ENCODE measurements at regions of chr22 and their contacts with region 1.

Region 1: DNA sequence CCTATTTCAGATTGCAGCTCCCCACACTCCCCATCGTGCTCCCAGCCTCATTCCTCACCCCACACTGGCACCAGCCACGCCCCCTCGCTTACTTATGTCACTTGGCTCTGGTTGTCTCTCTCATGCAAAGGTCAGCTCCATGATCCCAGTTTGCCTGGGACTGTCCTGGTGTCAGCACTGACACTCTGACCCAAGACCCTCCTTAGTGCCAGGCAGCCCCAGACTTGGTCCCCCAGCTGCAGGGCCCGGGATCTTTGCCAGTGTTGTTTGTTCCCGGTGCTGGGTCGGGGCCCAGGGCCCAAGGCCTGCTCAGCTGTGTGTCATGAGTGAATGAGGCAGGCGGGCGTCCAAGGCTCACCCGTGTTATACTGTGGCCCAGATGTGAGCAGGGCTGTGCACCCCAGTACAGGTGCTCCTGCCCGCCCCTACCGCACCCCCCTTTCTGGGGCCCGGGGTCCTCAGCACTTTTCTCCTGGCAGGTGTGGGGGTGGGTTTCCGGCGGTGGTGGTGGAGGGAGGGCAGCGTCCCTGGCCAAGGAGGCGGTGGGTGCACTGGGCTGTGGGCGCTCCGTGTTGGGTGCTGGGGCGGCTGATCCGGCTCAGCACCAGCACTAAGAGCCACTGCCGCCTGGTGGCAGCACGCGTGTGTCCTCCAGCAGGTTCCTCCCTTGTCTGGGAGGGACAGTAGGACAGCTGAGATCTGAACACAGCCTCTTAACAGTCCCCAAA is 19.5 kb downstream of the IL17REL start:
- DNase-seq: peak; percentile 49 to 65 (median 54)
- ATAC-seq: peak; percentile 97
- H3K4me3 ChIP-seq: no peak overlapping the region
- H3K27ac ChIP-seq: no peak overlapping the region
- H3K4me1 ChIP-seq: peaks cover 0 to 49% of the 10 kb centered on the region in 2 experiments; a peak in 3 of 5 replicates
- H3K27me3 ChIP-seq: no peaks in the 10 kb centered on the region
- CTCF ChIP-seq: peak; percentile 70 to 72 (median 71)
- EP300 ChIP-seq: no peak
- POLR2A ChIP-seq: no peak
- RAD21 ChIP-seq: peak; percentile 52 to 67

Region 2: GRCh38 chr22:50018608-50019285 is 25.7 kb after region 1 on chr22:
- CTCF ChIA-PET with region 1: no interaction called
- POLR2A ChIA-PET with region 1: no interaction called
- in situ Hi-C with region 1: no loop called
- intact Hi-C with region 1: no loop called
- DNase-seq: no peak
- ATAC-seq: no peak
- H3K4me3 ChIP-seq: no peak overlapping the region
- H3K27ac ChIP-seq: no peak overlapping the region
- H3K4me1 ChIP-seq: peaks cover 0 to 31% of the 10 kb centered on the region in 2 experiments; a peak in 2 of 5 replicates
- H3K27me3 ChIP-seq: peaks cover 0 to 21% of the 10 kb centered on the region in 2 experiments; a peak in 2 of 5 replicates
- CTCF ChIP-seq: no peak
- EP300 ChIP-seq: no peak
- POLR2A ChIP-seq: no peak
- RAD21 ChIP-seq: no peak

Region 3: GRCh38 chr22:50030297-50031188 is 37.5 kb after region 1 on chr22:
- CTCF ChIA-PET with region 1: no interaction called
- POLR2A ChIA-PET with region 1: interaction called, 3 read pairs
- in situ Hi-C with region 1: no loop called
- intact Hi-C with region 1: loop called (anchors 1 kb)
- DNase-seq: peak; percentile 82 to 85 (median 83)
- ATAC-seq: peak; percentile 99
- H3K4me3 ChIP-seq: no peak overlapping the region
- H3K27ac ChIP-seq: no peak overlapping the region
- H3K4me1 ChIP-seq: peaks cover 0 to 51% of the 10 kb centered on the region in 2 experiments; a peak in 2 of 5 replicates
- H3K27me3 ChIP-seq: peaks cover 8 to 71% of the 10 kb centered on the region in 2 experiments
- CTCF ChIP-seq: peak; percentile 77 to 96 (median 91)
- EP300 ChIP-seq: no peak
- POLR2A ChIP-seq: no peak
- RAD21 ChIP-seq: peak; percentile 90 to 97

Measured in K562 (cell line).